ENCODE measurements at regions of chrX and their contacts with region 1.

Region 1: DNA sequence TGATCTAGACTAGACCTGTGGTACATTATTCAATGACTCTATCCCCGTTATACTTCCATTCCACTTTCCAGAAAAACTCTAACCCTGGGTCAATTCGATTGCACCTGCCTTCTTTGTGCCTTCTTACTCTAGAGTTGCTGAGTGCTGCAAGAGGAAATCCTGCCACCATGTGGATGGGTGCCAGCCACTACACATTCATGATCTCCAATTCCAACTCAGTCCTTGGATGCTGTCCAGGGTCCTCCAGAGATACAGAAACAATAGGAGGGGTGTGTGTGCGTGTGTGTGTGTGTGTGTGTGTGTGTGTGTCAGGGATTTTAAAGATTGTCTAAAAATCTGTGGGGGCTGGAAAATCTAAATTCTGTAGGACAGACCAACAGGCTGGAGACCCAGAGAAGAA is 42.9 kb upstream of the INTS6L start:
- DNase-seq: no peak
- ATAC-seq: peak; percentile 89
- H3K4me3 ChIP-seq: no peak overlapping the region
- H3K27ac ChIP-seq: no peak overlapping the region
- H3K4me1 ChIP-seq: no peaks in the 10 kb centered on the region
- H3K27me3 ChIP-seq: no peaks in the 10 kb centered on the region; a peak in 2 of 4 replicates
- CTCF ChIP-seq: peak; percentile 47 to 68 (median 54); a peak in 5 of 6 replicates
- EP300 ChIP-seq: no peak
- POLR2A ChIP-seq: no peak
- RAD21 ChIP-seq: peak; percentile 55

Region 2: GRCh38 chrX:135185795-135186443 is 291.7 kb before region 1 on chrX:
- CTCF ChIA-PET with region 1: interaction called, 5 read pairs
- POLR2A ChIA-PET with region 1: no interaction called
- RAD21 ChIA-PET with region 1: interaction called, 5 read pairs
- SMC1A ChIA-PET with region 1: no interaction called
- in situ Hi-C with region 1: no loop called
- intact Hi-C with region 1: loop called (anchors 1 kb)
- DNase-seq: peak; percentile 11
- ATAC-seq: peak; percentile 97
- H3K4me3 ChIP-seq: no peak overlapping the region
- H3K27ac ChIP-seq: no peak overlapping the region
- H3K4me1 ChIP-seq: no peaks in the 10 kb centered on the region
- H3K27me3 ChIP-seq: no peaks in the 10 kb centered on the region
- CTCF ChIP-seq: peak; percentile 58 to 71 (median 70)
- EP300 ChIP-seq: no peak
- POLR2A ChIP-seq: no peak
- RAD21 ChIP-seq: peak; percentile 82

Region 3: DNA sequence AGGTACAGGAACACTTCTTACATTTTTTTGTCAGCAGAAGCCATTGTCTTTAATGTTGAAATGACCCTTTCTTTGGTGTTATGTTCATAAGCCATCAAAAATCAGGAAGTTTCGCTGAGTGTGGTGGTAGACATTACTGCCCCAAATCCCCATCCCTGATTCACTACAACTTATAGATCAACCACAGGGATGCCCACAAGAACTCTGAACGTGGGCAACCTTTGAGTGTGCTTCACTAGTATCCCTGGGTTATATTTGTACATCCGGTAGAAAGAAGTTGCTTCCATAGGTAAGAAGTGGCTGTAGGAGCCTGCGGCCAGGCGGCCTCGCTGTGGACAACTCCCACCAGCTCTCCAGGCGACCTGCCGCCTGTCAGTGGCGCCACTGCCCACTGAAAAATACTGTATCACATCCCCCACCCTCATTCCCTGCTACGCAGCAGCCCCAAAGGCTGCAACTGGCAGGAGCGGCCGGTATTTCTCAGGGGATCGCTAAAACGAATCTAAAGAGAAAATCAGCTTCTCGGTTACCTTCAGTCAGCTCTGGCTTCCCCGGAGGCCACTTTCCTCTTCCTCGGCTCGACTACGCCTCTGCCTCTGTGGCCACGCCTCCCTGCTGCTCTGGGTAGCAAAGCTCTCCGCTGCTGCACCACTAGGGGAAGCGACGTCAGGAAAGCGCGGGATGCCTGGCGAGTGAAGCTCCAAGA is 182.2 kb before region 1 on chrX:
- CTCF ChIA-PET with region 1: interaction called, 11 read pairs
- POLR2A ChIA-PET with region 1: no interaction called
- RAD21 ChIA-PET with region 1: no interaction called
- SMC1A ChIA-PET with region 1: interaction called, 3 read pairs
- in situ Hi-C with region 1: no loop called
- intact Hi-C with region 1: no loop called
- DNase-seq: peak; percentile 9
- ATAC-seq: peak; percentile 100
- H3K4me3 ChIP-seq: peak overlapping the region; percentile 54
- H3K27ac ChIP-seq: no peak overlapping the region; the same call in 1 of the 2 replicates
- H3K4me1 ChIP-seq: no peaks in the 10 kb centered on the region
- H3K27me3 ChIP-seq: no peaks in the 10 kb centered on the region
- CTCF ChIP-seq: peak; percentile 8 to 31 (median 24); a peak in 2 of 6 replicates
- EP300 ChIP-seq: no peak
- POLR2A ChIP-seq: no peak
- RAD21 ChIP-seq: no peak

Region 4: DNA sequence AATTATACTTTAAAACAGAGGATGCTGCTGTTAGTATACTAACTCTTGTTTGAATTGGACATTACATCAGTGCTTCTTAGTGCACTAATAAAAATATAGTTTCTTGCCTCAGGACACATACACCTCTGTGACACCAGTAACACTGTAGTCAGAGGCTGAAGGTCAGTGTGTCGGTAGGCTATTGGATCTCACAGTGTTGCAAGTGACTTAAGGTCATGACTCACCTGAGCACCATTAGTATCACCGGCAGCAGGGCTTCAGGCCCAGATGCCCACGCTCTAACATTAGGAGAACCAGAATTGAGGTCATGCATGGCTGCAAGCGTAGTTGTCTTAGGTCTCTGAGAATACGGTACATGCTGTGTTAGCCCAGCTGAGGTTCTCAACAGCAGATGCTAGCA is 153.1 kb before region 1 on chrX:
- CTCF ChIA-PET with region 1: no interaction called
- POLR2A ChIA-PET with region 1: no interaction called
- RAD21 ChIA-PET with region 1: no interaction called
- SMC1A ChIA-PET with region 1: no interaction called
- in situ Hi-C with region 1: no loop called
- intact Hi-C with region 1: no loop called
- DNase-seq: no peak
- ATAC-seq: no peak
- H3K4me3 ChIP-seq: no peak overlapping the region
- H3K27ac ChIP-seq: no peak overlapping the region
- H3K4me1 ChIP-seq: no peaks in the 10 kb centered on the region
- H3K27me3 ChIP-seq: no peaks in the 10 kb centered on the region
- CTCF ChIP-seq: no peak
- EP300 ChIP-seq: no peak
- POLR2A ChIP-seq: no peak
- RAD21 ChIP-seq: no peak

Measured in GM12878 (cell line).